Tibial artery (tissue), 4 donors: ENCODE measurements at regions of chr6 and their contacts with region 1.

Region 1: GRCh38 chr6:111642463-111643158 is 36.9 kb upstream of the TRAF3IP2 start:
- DNase-seq: peak; percentile 74 to 83
- H3K4me3 ChIP-seq: no peak overlapping the region
- H3K27ac ChIP-seq: no peak overlapping the region
- H3K4me1 ChIP-seq: peaks cover 0 to 7% (median 0%) of the 10 kb centered on the region in 4 donors
- H3K27me3 ChIP-seq: no peaks in the 10 kb centered on the region
- CTCF ChIP-seq: peak; percentile 60

Region 2: DNA sequence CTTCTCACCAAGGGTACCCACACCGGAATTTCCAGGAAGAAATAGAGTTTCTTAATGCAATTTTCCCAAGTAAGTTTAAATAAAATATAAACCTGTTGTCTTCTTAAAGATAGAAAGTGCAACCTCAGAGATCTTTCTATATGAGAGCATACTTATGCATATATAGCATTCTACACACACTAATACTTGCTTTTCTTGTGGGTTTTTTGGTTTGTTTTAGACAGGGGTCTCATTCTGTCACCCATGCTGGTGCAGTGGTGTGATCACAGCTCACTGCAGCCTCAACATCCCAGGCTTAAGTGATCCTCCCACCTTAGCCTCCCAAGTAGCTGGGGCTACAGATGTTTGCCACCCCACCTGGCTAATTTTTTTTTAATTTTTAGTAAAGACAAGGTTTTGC is 752.3 kb before region 1 on chr6:
- intact Hi-C with region 1: no loop called
- DNase-seq: no peak
- H3K4me3 ChIP-seq: no peak overlapping the region
- H3K27ac ChIP-seq: no peak overlapping the region
- H3K4me1 ChIP-seq: peaks cover 0 to 3% (median 0%) of the 10 kb centered on the region in 4 donors
- H3K27me3 ChIP-seq: no peaks in the 10 kb centered on the region
- CTCF ChIP-seq: no peak

Region 3: GRCh38 chr6:111259089-111259831 is 383.4 kb before region 1 on chr6:
- intact Hi-C with region 1: loop called (anchors 5 kb)
- DNase-seq: peak; percentile 99
- H3K4me3 ChIP-seq: peak overlapping the region; percentile 62 to 87
- H3K27ac ChIP-seq: peak overlapping the region; percentile 79 to 85
- H3K4me1 ChIP-seq: peaks cover 0 to 23% (median 14%) of the 10 kb centered on the region in 4 donors
- H3K27me3 ChIP-seq: no peaks in the 10 kb centered on the region
- CTCF ChIP-seq: peak; percentile 95 to 97

Region 4: GRCh38 chr6:111353912-111354462 is 288.6 kb before region 1 on chr6:
- intact Hi-C with region 1: loop called (anchors 10 kb)
- DNase-seq: no peak
- H3K4me3 ChIP-seq: no peak overlapping the region
- H3K27ac ChIP-seq: peak overlapping the region; percentile 35 to 43
- H3K4me1 ChIP-seq: peaks cover 0 to 12% (median 3%) of the 10 kb centered on the region in 4 donors
- H3K27me3 ChIP-seq: no peaks in the 10 kb centered on the region
- CTCF ChIP-seq: no peak

Region 5: DNA sequence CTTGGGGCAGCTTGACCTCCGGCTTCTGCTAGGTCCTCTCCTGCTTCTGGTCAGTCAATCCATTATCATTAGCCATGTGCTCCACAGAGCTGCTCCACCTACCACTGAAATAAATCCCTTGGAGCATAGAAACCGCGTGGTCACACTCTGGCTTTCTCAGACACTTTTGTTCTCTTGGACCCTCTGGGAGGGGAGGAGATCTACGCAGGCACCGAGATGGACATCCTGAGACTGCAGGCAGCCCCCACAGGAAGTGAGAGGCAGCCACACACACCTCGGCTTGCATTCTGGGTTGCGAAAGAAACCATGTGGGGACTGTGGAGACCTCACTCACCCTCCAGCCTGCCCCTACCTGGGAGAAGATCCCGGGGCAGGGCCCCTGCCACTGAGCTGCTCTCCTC is 151.1 kb after region 1 on chr6:
- intact Hi-C with region 1: no loop called
- DNase-seq: no peak
- H3K4me3 ChIP-seq: no peak overlapping the region
- H3K27ac ChIP-seq: no peak overlapping the region
- H3K4me1 ChIP-seq: peaks cover 0 to 4% (median 0%) of the 10 kb centered on the region in 4 donors
- H3K27me3 ChIP-seq: no peaks in the 10 kb centered on the region
- CTCF ChIP-seq: no peak